ENCODE measurements at regions of chr10 and their contacts with region 1.

Region 1: DNA sequence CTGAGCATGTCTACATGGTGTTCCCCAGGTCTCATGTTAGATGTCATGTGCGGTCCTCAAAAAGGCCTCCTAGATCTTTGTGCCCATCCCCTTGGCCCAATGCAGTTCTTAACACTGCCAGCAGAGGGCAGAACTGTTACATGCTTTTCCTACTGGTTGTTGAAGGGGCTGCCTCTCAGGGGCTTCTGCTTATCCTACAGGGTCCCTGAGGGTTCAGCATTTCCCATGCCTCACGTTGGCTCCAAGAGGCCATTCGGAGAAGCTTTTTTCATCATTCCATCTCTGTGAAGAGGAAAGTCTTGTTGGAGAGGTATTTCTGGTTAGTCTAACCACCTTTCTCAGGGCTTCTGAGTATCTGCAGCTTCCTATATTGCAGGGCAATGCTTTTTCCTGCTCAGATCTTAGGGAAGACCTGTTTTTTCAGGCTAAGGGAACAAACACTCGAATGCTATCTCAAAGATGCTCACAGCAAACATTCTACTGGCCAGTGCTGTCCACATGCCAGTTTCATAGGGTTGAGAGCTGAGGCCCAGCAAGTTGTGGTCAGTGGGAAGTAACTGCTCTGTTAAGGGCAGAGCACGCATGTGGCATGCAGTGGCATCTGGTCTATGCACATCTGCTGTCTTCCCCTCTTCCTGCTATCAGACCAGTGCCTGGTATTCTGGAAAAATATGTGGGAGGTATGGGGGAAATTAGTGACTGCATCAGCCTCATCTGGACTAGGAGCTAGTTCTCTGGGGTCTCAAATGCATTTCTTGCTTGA is 31.5 kb downstream of the MBL2 start:
- DNase-seq: no peak
- ATAC-seq: no peak
- H3K4me3 ChIP-seq: no peak overlapping the region
- H3K27ac ChIP-seq: no peak overlapping the region
- H3K4me1 ChIP-seq: no peaks in the 10 kb centered on the region
- H3K27me3 ChIP-seq: peaks cover 0 to 6% (median 0%) of the 10 kb centered on the region in 7 donors
- CTCF ChIP-seq: peak; percentile 58 to 86 (median 71)

Region 2: GRCh38 chr10:52779541-52780390 is 38.7 kb after region 1 on chr10:
- intact Hi-C with region 1: loop called in 5 of 10 experiments (anchors 1 to 5 kb)
- DNase-seq: peak; percentile 40 to 63
- ATAC-seq: peak; percentile 46 to 87 (median 66)
- H3K4me3 ChIP-seq: no peak overlapping the region
- H3K27ac ChIP-seq: no peak overlapping the region
- H3K4me1 ChIP-seq: no peaks in the 10 kb centered on the region
- H3K27me3 ChIP-seq: peaks cover 0 to 22% (median 16%) of the 10 kb centered on the region in 7 donors
- CTCF ChIP-seq: peak; percentile 55 to 88 (median 78)

Measured in heart right ventricle (tissue), 16 donors.